Activated CD4-positive, alpha-beta memory T cell treated with anti-CD3 and anti-CD28 coated beads, Interleukin-2, amount 10 ng/mL, durations not matched to agents 7 days and 5 days (primary cell): ENCODE measurements at regions of chr6 and their contacts with region 1.

Region 1: GRCh38 chr6:16651871-16652270 is 109.4 kb downstream of the ATXN1 start:
- DNase-seq: peak; percentile 29
- H3K4me3 Mint-ChIP-seq: peak overlapping the region; percentile 52
- H3K27ac Mint-ChIP-seq: peak overlapping the region; percentile 88
- H3K4me1 Mint-ChIP-seq: peaks cover 65% of the 10 kb centered on the region
- H3K27me3 Mint-ChIP-seq: no peaks in the 10 kb centered on the region

Region 2: GRCh38 chr6:15698471-15698870 is 953.4 kb before region 1 on chr6:
- CTCF ChIA-PET with region 1: no interaction called
- POLR2A ChIA-PET with region 1: no interaction called
- DNase-seq: no peak
- H3K4me3 Mint-ChIP-seq: no peak overlapping the region
- H3K27ac Mint-ChIP-seq: no peak overlapping the region
- H3K4me1 Mint-ChIP-seq: no peaks in the 10 kb centered on the region
- H3K27me3 Mint-ChIP-seq: peaks cover 16% of the 10 kb centered on the region

Region 3: GRCh38 chr6:16602035-16602434 is 49.8 kb before region 1 on chr6:
- CTCF ChIA-PET with region 1: no interaction called
- POLR2A ChIA-PET with region 1: interaction called, 12 read pairs
- DNase-seq: peak; percentile 38
- H3K4me3 Mint-ChIP-seq: no peak overlapping the region
- H3K27ac Mint-ChIP-seq: peak overlapping the region; percentile 12
- H3K4me1 Mint-ChIP-seq: peaks cover 45% of the 10 kb centered on the region
- H3K27me3 Mint-ChIP-seq: no peaks in the 10 kb centered on the region

Region 4: DNA sequence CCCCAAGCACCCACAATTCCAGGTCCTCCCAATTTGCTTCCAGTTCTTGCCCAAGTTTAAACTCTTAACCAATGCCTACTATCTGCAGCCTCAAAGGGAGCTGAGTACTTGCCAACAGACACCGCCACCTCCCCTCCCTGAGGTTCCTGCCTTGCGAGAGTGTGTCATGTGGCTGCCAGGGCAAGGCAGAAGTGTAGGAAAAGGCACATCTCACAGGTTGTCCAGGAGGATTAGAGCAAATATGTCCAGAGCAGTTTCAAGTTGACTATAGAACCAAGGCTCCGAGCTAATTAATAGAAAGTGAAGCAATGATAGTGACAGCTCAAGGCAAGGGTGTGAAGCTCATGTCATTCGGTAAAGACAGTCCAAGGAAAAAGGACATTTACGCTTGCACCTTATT is 18.4 kb before region 1 on chr6:
- CTCF ChIA-PET with region 1: interaction called, 3 read pairs
- POLR2A ChIA-PET with region 1: interaction called, 13 read pairs
- DNase-seq: no peak
- H3K4me3 Mint-ChIP-seq: no peak overlapping the region
- H3K27ac Mint-ChIP-seq: peak overlapping the region; percentile 1
- H3K4me1 Mint-ChIP-seq: peaks cover 43% of the 10 kb centered on the region
- H3K27me3 Mint-ChIP-seq: no peaks in the 10 kb centered on the region

Region 5: DNA sequence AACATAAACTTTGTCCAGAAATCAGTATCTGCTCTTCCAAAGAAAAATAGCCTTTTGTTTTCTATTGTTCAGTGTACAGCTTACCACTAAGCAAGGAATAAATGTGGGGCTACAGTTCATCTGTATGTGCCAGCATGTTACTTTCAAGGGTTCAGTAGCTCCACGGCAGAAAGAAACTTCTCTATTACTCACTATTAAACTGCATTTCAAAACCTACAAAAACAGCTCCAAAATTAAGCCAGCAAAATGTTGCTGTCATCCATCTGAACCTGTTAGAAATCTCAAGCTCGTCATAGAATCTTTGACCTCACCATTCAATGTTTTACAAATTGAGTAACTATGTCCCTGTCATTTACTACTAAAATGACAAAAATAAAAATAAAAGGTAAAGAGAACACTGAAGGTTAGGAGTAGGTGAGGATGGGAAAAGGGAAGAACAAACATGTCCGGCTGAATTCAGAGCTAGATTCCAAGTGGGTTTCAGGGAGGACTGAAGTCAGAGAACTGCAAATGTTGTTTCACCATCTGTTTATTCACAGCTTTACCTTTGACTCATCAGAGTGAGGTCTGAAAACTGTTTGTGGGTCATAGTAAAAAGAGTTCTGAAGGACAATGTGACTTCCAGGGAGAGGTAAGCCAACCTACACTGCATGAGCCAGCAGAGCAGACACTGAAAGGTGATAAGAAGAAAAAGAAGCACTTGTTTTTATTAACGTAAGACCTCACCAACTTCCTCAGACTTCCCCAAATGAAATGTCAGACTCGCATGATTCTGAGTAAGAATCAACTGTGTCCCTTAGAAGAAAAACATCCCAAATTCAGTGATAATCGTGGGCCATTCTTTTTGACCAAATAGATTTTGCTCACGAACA is 47.4 kb after region 1 on chr6:
- CTCF ChIA-PET with region 1: interaction called, 27 read pairs
- POLR2A ChIA-PET with region 1: interaction called, 62 read pairs
- DNase-seq: no peak
- H3K4me3 Mint-ChIP-seq: peak overlapping the region; percentile 78
- H3K27ac Mint-ChIP-seq: peak overlapping the region; percentile 96
- H3K4me1 Mint-ChIP-seq: peaks cover 83% of the 10 kb centered on the region
- H3K27me3 Mint-ChIP-seq: no peaks in the 10 kb centered on the region

Region 6: GRCh38 chr6:16731478-16732051 is 79.7 kb after region 1 on chr6:
- CTCF ChIA-PET with region 1: interaction called, 3 read pairs
- POLR2A ChIA-PET with region 1: interaction called, 13 read pairs
- DNase-seq: peak; percentile 63
- H3K4me3 Mint-ChIP-seq: peak overlapping the region; percentile 61
- H3K27ac Mint-ChIP-seq: peak overlapping the region; percentile 86
- H3K4me1 Mint-ChIP-seq: peaks cover 75% of the 10 kb centered on the region
- H3K27me3 Mint-ChIP-seq: no peaks in the 10 kb centered on the region

Region 7: GRCh38 chr6:17258749-17259148 is 606.9 kb after region 1 on chr6:
- CTCF ChIA-PET with region 1: no interaction called
- POLR2A ChIA-PET with region 1: no interaction called
- DNase-seq: no peak
- H3K4me3 Mint-ChIP-seq: no peak overlapping the region
- H3K27ac Mint-ChIP-seq: no peak overlapping the region
- H3K4me1 Mint-ChIP-seq: no peaks in the 10 kb centered on the region
- H3K27me3 Mint-ChIP-seq: peaks cover 6% of the 10 kb centered on the region